Mammary epithelial cell (primary cell): ENCODE measurements at regions of chr14 and their contacts with region 1.

Region 1: GRCh38 chr14:69559581-69560011 is 15.1 kb downstream of the CCDC177 start:
- DNase-seq: peak; percentile 31
- H3K4me3 ChIP-seq: no peak overlapping the region
- H3K27ac ChIP-seq: no peak overlapping the region
- H3K4me1 ChIP-seq: peaks cover 5% of the 10 kb centered on the region
- H3K27me3 ChIP-seq: no peaks in the 10 kb centered on the region
- CTCF ChIP-seq: no peak

Region 2: GRCh38 chr14:69291891-69292561 is 267.6 kb before region 1 on chr14:
- CTCF ChIA-PET with region 1: no interaction called
- dilution Hi-C with region 1: loop called (anchors 5 kb)
- in situ Hi-C with region 1: no loop called
- intact Hi-C with region 1: no loop called
- DNase-seq: no peak
- H3K4me3 ChIP-seq: no peak overlapping the region
- H3K27ac ChIP-seq: no peak overlapping the region
- H3K4me1 ChIP-seq: no peaks in the 10 kb centered on the region
- H3K27me3 ChIP-seq: no peaks in the 10 kb centered on the region
- CTCF ChIP-seq: no peak

Region 3: GRCh38 chr14:69519204-69520100 is 40.1 kb before region 1 on chr14:
- CTCF ChIA-PET with region 1: no interaction called
- dilution Hi-C with region 1: loop called (anchors 5 kb)
- in situ Hi-C with region 1: no loop called
- intact Hi-C with region 1: no loop called
- DNase-seq: peak; percentile 29
- H3K4me3 ChIP-seq: no peak overlapping the region
- H3K27ac ChIP-seq: no peak overlapping the region
- H3K4me1 ChIP-seq: no peaks in the 10 kb centered on the region
- H3K27me3 ChIP-seq: peaks cover 2% of the 10 kb centered on the region
- CTCF ChIP-seq: no peak

Region 4: GRCh38 chr14:69574263-69574953 is 14.8 kb after region 1 on chr14 and contains the start of gene CCDC177:
- CTCF ChIA-PET with region 1: no interaction called
- dilution Hi-C with region 1: no loop called
- in situ Hi-C with region 1: no loop called
- intact Hi-C with region 1: loop called (anchors 2 kb)
- DNase-seq: peak; percentile 48
- H3K4me3 ChIP-seq: peak within 1 kb of the TSS in 2 of 3 experiments; percentile 28 to 36
- H3K27ac ChIP-seq: no peak within 1 kb of the TSS
- H3K4me1 ChIP-seq: peaks cover 12% of the 10 kb centered on the region
- H3K27me3 ChIP-seq: peaks cover 37% of the 10 kb centered on the region
- CTCF ChIP-seq: peak; percentile 87 to 99
- total RNA-seq, gene CCDC177: not detected